BJ (cell line): ENCODE measurements at regions of chr5 and their contacts with region 1.

Region 1: DNA sequence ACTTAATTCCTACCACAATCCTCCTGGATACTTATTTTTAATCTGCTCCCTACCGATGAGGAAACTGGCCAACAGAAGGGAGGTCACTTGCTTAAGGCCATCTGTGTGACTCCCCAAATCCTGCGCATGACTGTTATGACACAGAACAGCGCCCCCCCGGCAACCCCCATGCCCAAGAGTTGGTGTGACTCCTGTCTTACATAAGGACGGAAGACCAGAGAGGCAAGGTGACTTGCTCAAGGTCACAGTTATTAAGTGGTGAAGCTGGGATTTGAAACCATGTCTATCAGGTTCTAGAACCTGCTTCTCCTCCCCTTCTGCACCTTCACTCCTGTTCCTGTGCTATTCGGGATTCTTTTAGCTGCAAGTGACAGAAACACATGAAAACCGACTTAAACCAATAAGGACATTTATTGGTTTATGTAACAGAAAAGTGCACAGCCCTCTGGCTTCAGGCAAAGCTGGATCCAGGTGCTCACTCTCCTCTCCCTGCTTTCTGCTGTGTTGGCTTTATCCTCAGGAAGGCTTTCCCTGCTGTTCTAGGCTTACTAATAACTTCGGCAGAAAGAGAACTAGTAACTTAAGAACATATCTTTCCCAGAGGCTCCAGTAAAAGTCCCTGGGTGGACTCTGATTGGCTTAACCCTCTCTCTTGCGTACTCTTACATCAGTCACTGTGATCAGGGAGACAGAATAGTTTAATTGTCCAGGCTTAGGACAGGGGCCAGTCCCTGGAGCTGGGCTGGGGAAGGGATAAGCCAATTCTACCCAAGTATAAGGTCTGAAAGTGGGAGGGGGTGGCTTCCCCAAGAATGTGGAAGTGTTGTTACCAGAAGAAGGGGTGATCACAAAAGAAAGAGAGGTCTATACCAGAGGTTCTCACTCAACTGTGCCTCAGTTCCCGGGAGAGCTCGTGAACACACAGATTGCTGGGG is 43.7 kb downstream of the FGF18 start:
- DNase-seq: no peak
- H3K4me3 ChIP-seq: no peak overlapping the region
- H3K27me3 ChIP-seq: peaks cover 8% of the 10 kb centered on the region
- CTCF ChIP-seq: no peak

Region 2: DNA sequence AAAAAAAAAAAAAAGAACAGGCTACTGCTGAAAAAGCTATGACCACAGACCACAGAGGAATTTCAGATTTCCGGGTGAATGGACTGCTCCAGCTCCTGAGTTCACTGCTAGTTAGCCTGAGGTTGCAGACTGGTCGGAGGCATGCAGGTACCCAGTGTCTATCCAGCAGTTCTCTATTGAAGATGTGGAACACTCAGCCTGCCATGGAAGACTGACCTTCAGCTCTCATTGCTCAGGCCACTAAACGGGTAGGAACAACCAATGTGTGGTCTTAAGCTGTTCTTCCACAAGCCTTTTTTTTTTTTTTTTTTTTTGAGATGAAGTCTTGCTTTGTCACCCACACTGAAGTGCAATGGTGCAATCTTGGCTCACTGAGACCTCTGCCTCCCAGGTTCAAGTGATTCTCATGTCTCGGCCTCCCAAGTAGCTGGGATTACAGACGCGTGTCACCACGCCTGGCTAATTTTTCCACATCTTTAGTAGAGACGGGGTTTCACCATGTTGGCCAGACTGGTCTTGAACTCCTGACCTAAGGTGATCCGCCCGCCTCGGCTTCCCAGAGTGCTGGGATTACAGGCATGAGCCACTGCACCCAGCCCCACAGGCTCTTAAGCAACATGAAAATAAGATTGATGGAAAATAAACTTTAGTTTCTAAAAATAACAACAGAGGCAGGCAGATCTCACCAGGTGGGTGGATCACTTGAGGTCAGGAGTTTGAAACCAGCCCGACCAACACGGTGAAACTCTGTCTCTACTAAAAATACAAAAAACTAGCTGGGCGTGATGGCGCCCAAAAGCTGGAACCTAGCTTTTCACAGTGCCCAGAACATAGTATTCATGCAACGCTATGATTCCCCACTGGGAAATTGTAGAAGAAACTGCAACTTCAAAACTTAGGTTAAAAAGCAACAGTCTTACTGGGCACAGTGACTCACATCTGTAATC is 95.5 kb before region 1 on chr5:
- CTCF ChIA-PET with region 1: no interaction called
- POLR2A ChIA-PET with region 1: interaction called, 11 read pairs
- DNase-seq: no peak
- H3K4me3 ChIP-seq: no peak overlapping the region
- H3K27me3 ChIP-seq: no peaks in the 10 kb centered on the region
- CTCF ChIP-seq: no peak

Region 3: GRCh38 chr5:171537070-171537849 is 74.1 kb after region 1 on chr5:
- CTCF ChIA-PET with region 1: no interaction called
- POLR2A ChIA-PET with region 1: no interaction called
- DNase-seq: no peak
- H3K4me3 ChIP-seq: no peak overlapping the region
- H3K27me3 ChIP-seq: peaks cover 1% of the 10 kb centered on the region; the same call in 1 of the 2 replicates
- CTCF ChIP-seq: no peak